Right ventricle myocardium inferior (tissue), 1 donor: ENCODE measurements at regions of chr15 and their contacts with region 1.

Region 1: GRCh38 chr15:70810916-70811578 is 42.9 kb downstream of the LARP6 start:
- DNase-seq: no peak
- ATAC-seq: peak; percentile 29

Region 2: DNA sequence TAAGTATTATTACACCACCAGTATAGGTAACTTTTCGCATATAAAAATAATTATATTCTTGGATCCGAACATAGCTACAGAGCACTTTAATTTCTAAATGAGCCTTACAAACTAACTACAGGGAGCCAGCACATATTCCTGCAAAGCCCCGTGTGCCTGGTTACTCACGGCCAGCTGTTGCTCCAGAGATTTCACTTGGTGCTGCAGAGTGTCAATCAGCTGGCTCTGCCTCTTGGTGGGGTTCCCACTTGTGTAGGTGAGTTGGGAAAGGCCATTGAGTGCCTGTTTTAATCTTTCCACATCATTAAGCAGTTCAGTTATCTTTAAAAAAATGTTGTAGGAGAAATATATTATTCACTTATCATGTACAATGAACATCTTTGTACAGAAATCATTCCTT is 146.6 kb before region 1 on chr15:
- intact Hi-C with region 1: no loop called
- DNase-seq: no peak
- ATAC-seq: peak; percentile 65

Region 3: GRCh38 chr15:70763120-70763878 is 47.7 kb before region 1 on chr15 and contains the start of gene UACA:
- intact Hi-C with region 1: loop called (anchors 2 kb)
- DNase-seq: peak; percentile 95
- ATAC-seq: peak; percentile 99
- total RNA-seq, gene UACA: 25.8 TPM

Region 4: DNA sequence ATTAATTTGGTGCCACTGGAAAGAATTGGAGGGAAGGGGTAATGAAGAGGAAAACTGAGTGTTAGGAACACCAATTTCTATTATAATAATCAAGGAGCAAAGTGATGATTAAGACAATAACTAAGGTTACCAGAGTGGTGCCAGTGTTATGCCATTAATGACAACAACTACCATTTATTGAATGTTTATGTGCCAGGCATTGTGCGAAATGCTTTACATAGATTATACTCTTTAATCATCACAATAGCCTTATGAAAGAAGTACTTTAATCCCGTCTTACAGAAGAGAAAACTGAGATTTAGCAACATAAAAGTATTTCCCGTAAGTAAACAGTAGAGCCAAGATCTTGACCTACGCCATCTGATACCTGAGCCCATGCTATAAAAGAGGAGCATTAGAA is 812.1 kb after region 1 on chr15:
- intact Hi-C with region 1: no loop called
- DNase-seq: no peak
- ATAC-seq: no peak